Activated CD4-positive, alpha-beta memory T cell treated with anti-CD3 and anti-CD28 coated beads, Interleukin-2, amount 10 ng/mL, durations not matched to agents 7 days and 5 days (primary cell): ENCODE measurements at regions of chr17 and their contacts with region 1.

Region 1: DNA sequence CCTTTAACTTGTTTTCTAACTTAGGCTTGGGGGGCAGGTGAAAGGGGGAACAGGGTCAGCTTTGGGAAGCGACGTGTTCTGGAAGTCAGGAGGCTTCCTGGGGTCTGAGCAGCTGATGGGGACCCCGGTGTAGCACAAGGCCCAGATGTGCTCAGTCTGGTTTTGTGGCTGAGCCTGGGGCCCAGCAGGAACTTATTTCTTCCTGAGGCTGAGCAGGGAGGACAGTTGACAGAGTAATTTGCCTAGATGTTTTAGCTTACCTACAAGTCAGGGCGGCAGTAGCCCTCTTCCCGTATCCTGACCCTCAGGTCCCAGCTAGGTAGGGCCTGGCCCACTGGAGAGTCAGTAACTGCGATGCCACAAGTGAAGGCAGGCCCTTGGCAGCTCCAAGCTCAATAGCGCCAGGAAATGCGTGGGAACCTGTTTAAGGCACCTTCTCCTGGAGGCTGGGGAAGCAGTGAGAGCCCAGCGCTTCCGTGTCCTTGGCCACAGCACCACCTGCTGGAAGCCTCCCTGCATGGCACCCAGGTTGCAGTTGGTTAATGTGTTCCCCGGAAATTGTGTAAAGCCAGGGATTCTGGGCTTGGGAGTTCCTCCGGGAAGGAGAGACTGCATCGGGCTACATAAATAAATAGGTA is 5.2 kb downstream of the CCR7 start:
- DNase-seq: peak; percentile 86
- H3K4me3 Mint-ChIP-seq: peak overlapping the region; percentile 74
- H3K27ac Mint-ChIP-seq: peak overlapping the region; percentile 91
- H3K4me1 Mint-ChIP-seq: peaks cover 77% of the 10 kb centered on the region
- H3K27me3 Mint-ChIP-seq: peaks cover 37% of the 10 kb centered on the region

Region 2: DNA sequence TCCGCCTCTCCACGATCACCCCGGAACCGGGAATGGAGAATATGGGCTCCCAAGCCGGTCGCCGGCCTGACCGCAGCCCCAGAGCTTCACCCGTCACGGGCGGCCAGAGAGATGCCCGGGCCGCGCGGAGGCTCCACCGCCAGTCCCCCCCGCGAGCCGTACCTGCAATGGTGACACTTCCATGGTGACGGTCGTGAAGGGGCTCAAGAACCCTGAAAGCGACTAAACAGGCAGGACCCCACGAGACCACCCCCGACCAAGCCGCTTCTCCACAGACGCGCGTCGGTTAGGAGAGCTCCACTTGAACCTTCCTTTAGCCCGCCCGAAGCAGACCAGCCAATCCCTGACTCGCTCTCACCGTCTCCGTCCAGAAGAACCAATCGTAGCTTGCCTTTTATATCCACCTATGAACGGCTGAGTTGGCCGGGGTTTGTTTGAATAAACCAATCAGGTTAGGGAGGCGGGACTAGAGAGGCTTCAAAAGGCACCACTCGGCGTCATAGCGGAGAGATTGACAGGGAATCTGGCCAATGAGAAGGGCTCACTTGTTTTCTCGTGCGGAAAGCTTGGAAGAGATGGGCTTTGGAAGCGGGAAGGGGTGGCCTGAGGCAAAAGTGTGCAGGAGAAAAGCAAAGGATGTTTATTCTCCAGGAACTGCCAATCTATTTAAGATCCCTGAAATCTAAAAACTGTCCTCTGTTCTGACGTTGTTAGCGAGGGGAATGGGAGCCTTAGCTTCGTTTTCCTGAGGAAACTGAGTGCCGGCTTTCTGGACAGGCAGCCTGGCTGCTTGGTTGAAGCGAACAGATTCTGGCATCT is 142.3 kb before region 1 on chr17 and contains the start of gene TOP2A:
- CTCF ChIA-PET with region 1: interaction called, 59 read pairs
- POLR2A ChIA-PET with region 1: interaction called, 61 read pairs
- DNase-seq: peak; percentile 97
- H3K4me3 Mint-ChIP-seq: peak within 1 kb of the TSS; percentile 97
- H3K27ac Mint-ChIP-seq: peak within 1 kb of the TSS; percentile 92
- H3K4me1 Mint-ChIP-seq: peaks cover 47% of the 10 kb centered on the region
- H3K27me3 Mint-ChIP-seq: peaks cover 4% of the 10 kb centered on the region
- total RNA-seq, gene TOP2A: 361 to 373 TPM

Region 3: GRCh38 chr17:40474419-40475002 is 85.6 kb before region 1 on chr17:
- CTCF ChIA-PET with region 1: interaction called, 9 read pairs
- POLR2A ChIA-PET with region 1: interaction called, 12 read pairs
- DNase-seq: no peak
- H3K4me3 Mint-ChIP-seq: no peak overlapping the region
- H3K27ac Mint-ChIP-seq: no peak overlapping the region
- H3K4me1 Mint-ChIP-seq: peaks cover 30% of the 10 kb centered on the region
- H3K27me3 Mint-ChIP-seq: peaks cover 11% of the 10 kb centered on the region

Region 4: DNA sequence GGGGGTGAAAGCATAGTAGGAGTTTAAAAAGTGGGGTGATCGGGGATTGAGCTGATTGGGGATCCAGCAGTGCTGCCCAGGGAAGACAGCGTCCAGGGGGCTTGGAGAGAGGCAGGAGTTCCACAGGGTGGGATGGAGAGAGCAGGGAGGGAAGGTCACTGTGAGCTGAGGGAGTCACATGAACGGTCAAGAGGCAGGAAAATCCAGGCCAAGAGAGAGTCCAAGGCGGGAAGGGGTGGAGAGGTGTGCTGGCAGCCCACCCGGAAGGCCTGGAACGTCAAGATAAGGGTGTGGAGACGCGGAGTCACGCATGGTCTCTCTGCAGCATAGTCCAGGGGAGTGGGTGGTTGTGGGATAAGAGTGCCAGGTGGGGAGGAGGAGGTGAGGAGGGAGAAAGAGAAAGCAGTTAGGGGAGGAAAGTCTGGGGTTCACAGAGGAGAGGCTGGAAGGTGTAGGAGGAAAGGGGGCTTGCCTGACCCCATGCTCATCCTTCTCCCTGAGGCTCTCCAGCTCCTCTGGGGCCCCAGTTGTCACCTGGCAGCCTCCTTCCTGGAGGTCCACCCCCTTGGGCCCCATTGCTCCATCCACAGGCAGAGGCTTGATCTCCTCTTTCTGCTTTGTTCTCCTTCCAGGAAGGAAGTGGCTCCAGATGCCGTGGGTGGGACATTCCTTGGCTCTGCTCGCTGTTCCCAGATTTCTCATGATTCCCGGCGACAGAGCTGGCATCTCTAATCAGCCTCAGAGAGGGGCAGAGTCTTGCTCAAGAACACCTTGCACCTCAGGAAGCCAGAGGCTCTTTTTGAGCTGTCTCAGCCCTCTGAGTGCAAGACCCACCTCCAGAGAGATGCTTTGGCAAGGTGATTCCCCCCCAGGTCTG is 23.5 kb before region 1 on chr17:
- CTCF ChIA-PET with region 1: interaction called, 266 read pairs
- POLR2A ChIA-PET with region 1: interaction called, 81 read pairs
- DNase-seq: no peak
- H3K4me3 Mint-ChIP-seq: no peak overlapping the region
- H3K27ac Mint-ChIP-seq: no peak overlapping the region
- H3K4me1 Mint-ChIP-seq: peaks cover 73% of the 10 kb centered on the region
- H3K27me3 Mint-ChIP-seq: peaks cover 32% of the 10 kb centered on the region

Region 5: DNA sequence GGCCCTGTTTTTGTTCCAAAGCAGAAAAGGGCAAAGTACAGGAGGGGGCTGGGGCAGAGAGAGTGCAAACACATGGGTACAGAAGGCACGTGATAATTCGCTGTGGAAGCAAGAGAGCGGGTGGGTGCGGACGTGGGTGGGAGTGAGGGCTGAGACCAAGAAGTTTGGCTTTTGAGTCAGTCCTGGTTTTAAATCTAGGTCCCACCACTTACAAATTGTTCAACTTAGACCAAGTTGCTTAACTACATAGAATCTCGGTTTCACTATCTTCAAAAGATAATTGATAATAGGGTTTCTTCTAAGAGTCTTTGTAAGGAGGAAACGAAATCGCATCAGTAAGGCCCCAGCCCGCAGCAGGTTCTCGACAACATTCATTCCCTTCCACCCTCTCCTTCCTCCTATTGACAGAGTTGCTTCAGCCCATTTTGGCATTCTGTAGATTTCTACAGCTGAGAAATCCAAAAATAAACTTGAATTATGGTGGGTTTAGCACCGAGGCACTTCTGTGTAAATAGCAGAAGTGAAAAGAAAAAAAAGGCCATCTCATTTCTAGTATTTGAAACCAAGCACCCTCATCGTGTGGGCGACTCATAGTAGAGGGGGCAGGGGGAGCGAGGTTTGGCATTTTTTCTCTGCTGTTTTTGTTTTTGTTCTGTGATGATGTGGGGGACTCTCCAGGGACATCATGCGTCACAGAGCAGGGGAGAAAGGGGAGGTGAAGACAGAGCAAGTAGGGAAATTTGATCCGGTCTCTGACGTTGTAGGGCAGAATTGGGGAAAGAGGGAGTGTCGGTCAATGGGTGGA is 38.8 kb after region 1 on chr17:
- CTCF ChIA-PET with region 1: interaction called, 15 read pairs
- POLR2A ChIA-PET with region 1: interaction called, 130 read pairs
- DNase-seq: peak; percentile 61
- H3K4me3 Mint-ChIP-seq: peak overlapping the region; percentile 44
- H3K27ac Mint-ChIP-seq: peak overlapping the region; percentile 97
- H3K4me1 Mint-ChIP-seq: peaks cover 69% of the 10 kb centered on the region
- H3K27me3 Mint-ChIP-seq: no peaks in the 10 kb centered on the region

Region 6: DNA sequence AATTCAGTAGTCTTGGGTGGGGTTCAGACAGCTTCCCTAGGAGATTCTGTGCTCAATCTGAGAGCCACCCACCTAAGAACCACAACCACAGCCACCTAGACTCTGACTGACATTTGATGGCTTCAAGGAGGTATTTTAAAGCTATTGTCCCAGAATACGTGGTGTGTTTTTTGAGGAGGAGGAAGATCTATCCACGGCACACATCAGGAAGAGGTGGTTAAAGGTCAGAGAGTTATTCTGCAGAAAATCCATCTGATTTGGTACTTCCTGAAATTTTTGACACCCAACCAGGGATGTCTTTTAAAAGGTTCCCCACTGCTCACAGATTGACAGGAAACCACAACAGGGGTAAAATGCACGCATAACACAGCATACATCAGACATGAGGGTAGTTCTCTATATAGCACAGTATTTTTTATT is 62.4 kb after region 1 on chr17:
- CTCF ChIA-PET with region 1: interaction called, 54 read pairs
- POLR2A ChIA-PET with region 1: interaction called, 18 read pairs
- DNase-seq: no peak
- H3K4me3 Mint-ChIP-seq: peak overlapping the region; percentile 18
- H3K27ac Mint-ChIP-seq: peak overlapping the region; percentile 17
- H3K4me1 Mint-ChIP-seq: peaks cover 60% of the 10 kb centered on the region
- H3K27me3 Mint-ChIP-seq: no peaks in the 10 kb centered on the region